ENCODE measurements at regions of chr11 and their contacts with region 1.

Region 1: DNA sequence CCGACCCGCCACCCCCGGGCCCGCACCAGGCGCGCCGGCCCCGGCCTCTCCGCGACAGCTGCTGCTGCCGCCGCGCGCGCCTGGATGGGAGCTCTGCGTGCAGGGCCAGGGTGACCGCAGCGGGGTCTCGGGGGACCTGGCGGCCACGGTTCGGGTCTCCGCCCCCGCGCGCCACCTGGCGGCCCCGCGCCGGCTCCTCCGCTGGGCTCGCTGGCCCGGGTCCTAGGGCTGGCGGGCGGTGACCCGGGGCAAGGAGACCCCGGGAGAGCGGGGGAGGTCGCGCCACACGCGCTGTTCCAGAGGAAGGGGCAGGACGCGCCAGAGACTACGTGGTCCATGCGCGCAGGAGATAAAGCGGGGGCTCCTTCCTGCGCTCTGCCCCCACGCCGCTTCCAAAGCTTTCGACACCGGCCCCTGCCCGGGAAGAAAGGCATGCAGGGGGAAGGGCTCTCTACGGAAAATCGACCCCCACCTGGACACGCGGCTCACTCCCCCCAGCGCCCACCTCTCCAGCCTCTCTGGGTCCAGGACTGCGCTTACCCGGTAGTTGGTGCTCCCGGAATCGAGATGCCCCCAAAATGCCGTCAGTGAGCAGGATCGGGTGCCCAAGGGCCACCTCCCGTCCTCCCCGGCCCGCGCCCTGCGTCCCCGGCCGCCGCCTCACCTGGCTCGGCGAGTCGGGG is 475 bp downstream of the SHANK2 start:
- DNase-seq: no peak
- H3K4me3 ChIP-seq: peak overlapping the region; percentile 62 to 78 (median 70)
- H3K27ac ChIP-seq: peak overlapping the region; percentile 16
- H3K4me1 ChIP-seq: peaks cover 14% of the 10 kb centered on the region
- H3K27me3 ChIP-seq: no peaks in the 10 kb centered on the region
- CTCF ChIP-seq: peak in 1 of 2 donors; percentile 47

Region 2: DNA sequence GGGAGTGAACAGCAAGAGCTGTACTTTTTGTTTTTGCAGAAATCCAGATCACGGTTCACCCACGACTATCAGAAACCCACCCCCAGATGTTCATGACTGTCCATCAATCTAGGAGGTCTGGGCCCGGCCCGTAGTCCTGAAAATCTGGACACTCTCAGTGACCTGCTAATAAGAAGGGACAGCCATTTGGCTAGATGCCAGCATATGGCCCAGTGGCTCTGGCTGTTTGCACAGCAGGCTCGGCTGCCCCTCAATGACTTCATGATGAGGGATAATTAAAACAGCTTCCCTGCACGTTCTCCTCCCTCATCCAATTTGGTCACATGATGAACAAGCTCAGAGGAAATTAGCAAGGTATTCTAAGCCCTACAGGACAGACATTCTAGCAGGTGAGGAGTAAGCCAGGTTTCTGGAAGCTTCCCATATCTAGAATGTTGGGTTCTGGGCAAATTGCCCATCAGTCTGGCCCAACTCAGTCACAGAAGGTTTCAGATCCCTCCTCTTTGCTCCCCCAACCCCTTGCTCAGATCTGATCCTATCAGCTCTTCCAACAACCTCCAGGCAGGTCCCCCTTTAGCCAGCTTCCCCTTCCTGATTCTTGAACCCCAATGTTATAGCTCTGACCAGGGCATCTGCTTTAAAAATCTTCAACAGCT is 396.9 kb before region 1 on chr11:
- CTCF ChIA-PET with region 1: no interaction called
- dilution Hi-C with region 1: loop called (anchors 5 kb)
- in situ Hi-C with region 1: no loop called
- intact Hi-C with region 1: no loop called
- DNase-seq: no peak
- H3K4me3 ChIP-seq: no peak overlapping the region
- H3K27ac ChIP-seq: no peak overlapping the region
- H3K4me1 ChIP-seq: no peaks in the 10 kb centered on the region
- H3K27me3 ChIP-seq: no peaks in the 10 kb centered on the region
- CTCF ChIP-seq: no peak

Region 3: DNA sequence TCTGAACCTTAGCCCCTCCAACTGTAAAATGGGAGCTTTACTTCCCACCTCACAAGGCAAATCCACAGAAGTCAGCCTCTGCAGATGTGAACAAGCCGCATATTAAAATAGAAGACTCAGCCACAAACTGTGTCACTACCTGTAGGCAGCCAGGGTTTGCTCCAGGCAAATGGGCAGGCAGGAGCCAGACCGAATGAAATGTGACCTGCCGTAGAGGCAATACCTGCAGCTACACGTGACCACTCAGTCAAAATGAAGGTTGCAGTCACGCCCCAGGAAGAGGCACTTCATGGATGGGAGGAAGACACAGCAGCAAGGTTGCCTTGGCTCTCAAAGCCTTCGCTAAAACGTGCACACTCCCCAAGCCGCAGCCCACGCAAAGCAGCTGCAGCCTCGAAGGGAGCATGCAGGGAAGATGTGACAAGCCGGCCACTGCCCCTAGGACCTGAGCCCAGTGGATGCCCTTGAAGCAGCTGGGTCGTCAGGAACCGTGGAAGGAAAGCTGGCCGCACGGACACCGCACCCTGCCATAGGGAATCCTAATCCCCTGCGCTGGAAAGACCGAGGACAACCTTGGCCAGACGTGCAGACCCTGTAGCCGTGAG is 52.6 kb before region 1 on chr11:
- CTCF ChIA-PET with region 1: no interaction called
- dilution Hi-C with region 1: loop called (anchors 10 kb)
- in situ Hi-C with region 1: no loop called
- intact Hi-C with region 1: no loop called
- DNase-seq: no peak
- H3K4me3 ChIP-seq: no peak overlapping the region
- H3K27ac ChIP-seq: no peak overlapping the region
- H3K4me1 ChIP-seq: no peaks in the 10 kb centered on the region
- H3K27me3 ChIP-seq: no peaks in the 10 kb centered on the region
- CTCF ChIP-seq: no peak

Region 4: GRCh38 chr11:71235719-71236118 is 16.2 kb before region 1 on chr11:
- CTCF ChIA-PET with region 1: no interaction called
- dilution Hi-C with region 1: no loop called
- in situ Hi-C with region 1: no loop called
- intact Hi-C with region 1: no loop called
- DNase-seq: no peak
- H3K4me3 ChIP-seq: no peak overlapping the region
- H3K27ac ChIP-seq: no peak overlapping the region
- H3K4me1 ChIP-seq: peaks cover 3% of the 10 kb centered on the region
- H3K27me3 ChIP-seq: no peaks in the 10 kb centered on the region
- CTCF ChIP-seq: no peak

Region 5: DNA sequence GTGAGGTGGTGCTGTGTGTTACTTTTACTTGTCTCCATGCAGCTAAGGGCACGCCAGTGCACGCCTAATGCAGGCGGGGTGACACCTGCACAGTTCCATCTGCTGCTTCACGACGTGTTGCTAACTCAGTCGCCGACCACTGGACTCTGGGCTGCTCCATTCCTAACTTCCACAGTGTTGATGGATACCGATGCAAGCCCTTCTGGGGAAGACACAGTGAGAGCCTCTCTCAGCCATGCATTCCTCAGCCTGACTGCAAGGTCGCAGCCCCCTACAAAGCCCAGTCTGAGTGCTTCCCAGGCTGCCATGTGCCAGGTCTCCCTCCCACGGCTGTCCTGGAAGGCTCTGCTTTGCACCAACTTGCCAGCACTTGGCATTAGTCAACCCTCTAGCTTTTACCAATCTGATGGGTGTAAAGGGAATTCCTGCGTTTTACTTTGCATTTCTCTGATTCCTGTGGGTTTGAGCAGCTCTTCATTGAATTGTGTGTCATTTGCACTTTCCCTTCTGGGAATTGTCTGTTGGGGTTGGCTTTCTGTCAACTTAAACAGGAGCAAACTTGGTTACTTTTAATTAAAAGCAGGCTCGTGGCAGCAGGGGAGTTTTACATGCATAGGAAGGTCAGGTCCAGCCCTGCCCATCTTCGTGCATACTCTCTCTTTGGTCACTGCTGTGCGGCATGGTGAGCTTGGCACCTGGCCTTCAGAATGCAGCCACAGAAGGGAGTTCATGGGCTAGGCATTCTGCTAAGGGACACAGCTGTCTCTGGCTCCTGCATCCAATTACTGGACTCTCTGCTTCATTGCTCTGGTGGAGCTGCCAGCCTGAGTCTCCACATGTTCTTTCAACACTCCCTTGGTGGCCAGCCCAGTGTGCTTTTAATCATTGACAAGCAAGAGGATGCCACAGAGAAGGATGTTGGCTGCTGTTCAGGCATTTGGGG is 35.1 kb after region 1 on chr11:
- CTCF ChIA-PET with region 1: no interaction called
- dilution Hi-C with region 1: no loop called
- in situ Hi-C with region 1: no loop called
- intact Hi-C with region 1: loop called (anchors 5 kb)
- DNase-seq: peak; percentile 95
- H3K4me3 ChIP-seq: peak overlapping the region in 2 of 3 experiments; percentile 1 to 11
- H3K27ac ChIP-seq: peak overlapping the region; percentile 52
- H3K4me1 ChIP-seq: peaks cover 48% of the 10 kb centered on the region
- H3K27me3 ChIP-seq: no peaks in the 10 kb centered on the region
- CTCF ChIP-seq: no peak

Region 6: GRCh38 chr11:71355266-71355665 is 103.4 kb after region 1 on chr11:
- CTCF ChIA-PET with region 1: interaction called, 10 read pairs
- dilution Hi-C with region 1: no loop called
- in situ Hi-C with region 1: no loop called
- intact Hi-C with region 1: no loop called
- DNase-seq: peak; percentile 29
- H3K4me3 ChIP-seq: no peak overlapping the region
- H3K27ac ChIP-seq: no peak overlapping the region
- H3K4me1 ChIP-seq: no peaks in the 10 kb centered on the region
- H3K27me3 ChIP-seq: no peaks in the 10 kb centered on the region
- CTCF ChIP-seq: no peak